ENCODE measurements at regions of chr5 and their contacts with region 1.

Region 1: GRCh38 chr5:141923448-141924352 is at the start of gene DELE1:
- DNase-seq: peak; percentile 94 to 96 (median 94)
- ATAC-seq: peak; percentile 98
- H3K4me3 ChIP-seq: peak within 1 kb of the TSS; percentile 76
- H3K27ac ChIP-seq: peak within 1 kb of the TSS; percentile 91
- H3K4me1 ChIP-seq: peaks cover 19 to 26% of the 10 kb centered on the region in 2 experiments; a peak in 4 of 5 replicates
- H3K27me3 ChIP-seq: no peaks in the 10 kb centered on the region
- CTCF ChIP-seq: no peak
- EP300 ChIP-seq: no peak
- POLR2A ChIP-seq: peak; percentile 98
- RAD21 ChIP-seq: no peak
- polyA plus RNA-seq, gene DELE1: 16.6 to 37.6 TPM

Region 2: GRCh38 chr5:141849375-141850243 is 74.1 kb before region 1 on chr5:
- CTCF ChIA-PET with region 1: no interaction called
- POLR2A ChIA-PET with region 1: interaction called, 4 read pairs
- in situ Hi-C with region 1: no loop called
- intact Hi-C with region 1: loop called (anchors 2 kb)
- DNase-seq: peak; percentile 91 to 94 (median 92)
- ATAC-seq: peak; percentile 86
- H3K4me3 ChIP-seq: peak overlapping the region; percentile 53
- H3K27ac ChIP-seq: peak overlapping the region; percentile 94
- H3K4me1 ChIP-seq: peaks cover 20 to 43% of the 10 kb centered on the region in 2 experiments
- H3K27me3 ChIP-seq: peaks cover 0 to 1% of the 10 kb centered on the region in 2 experiments; a peak in 1 of 5 replicates
- CTCF ChIP-seq: no peak
- EP300 ChIP-seq: peak; percentile 29
- POLR2A ChIP-seq: peak; percentile 89
- RAD21 ChIP-seq: no peak

Region 3: GRCh38 chr5:141940695-141941271 is 17.1 kb after region 1 on chr5:
- CTCF ChIA-PET with region 1: no interaction called
- POLR2A ChIA-PET with region 1: interaction called, 10 read pairs
- in situ Hi-C with region 1: no loop called
- intact Hi-C with region 1: no loop called
- DNase-seq: peak; percentile 30 to 38 (median 34)
- ATAC-seq: peak; percentile 89
- H3K4me3 ChIP-seq: no peak overlapping the region
- H3K27ac ChIP-seq: no peak overlapping the region
- H3K4me1 ChIP-seq: peaks cover 0 to 8% of the 10 kb centered on the region in 2 experiments; a peak in 2 of 5 replicates
- H3K27me3 ChIP-seq: peaks cover 10 to 11% of the 10 kb centered on the region in 2 experiments; a peak in 3 of 5 replicates
- CTCF ChIP-seq: peak in 2 of 3 experiments; percentile 28 to 31; a peak in 2 of 6 replicates
- EP300 ChIP-seq: no peak
- POLR2A ChIP-seq: no peak; the same call in 1 of the 2 replicates
- RAD21 ChIP-seq: no peak